OCI-LY7 (cell line): ENCODE measurements at regions of chr11 and their contacts with region 1.

Region 1: GRCh38 chr11:121292495-121293287 is at the start of gene SC5D:
- DNase-seq: peak; percentile 97
- H3K4me3 ChIP-seq: peak within 1 kb of the TSS; percentile 82
- H3K27ac ChIP-seq: peak within 1 kb of the TSS; percentile 76
- H3K4me1 ChIP-seq: peaks cover 26% of the 10 kb centered on the region
- CTCF ChIP-seq: no peak; the same call in 1 of the 2 replicates
- total RNA-seq, gene SC5D: 16.4 and 27.9 TPM in 2 replicates

Region 2: GRCh38 chr11:121236115-121237001 is 56.3 kb before region 1 on chr11:
- CTCF ChIA-PET with region 1: no interaction called
- POLR2A ChIA-PET with region 1: interaction called, 3 read pairs
- intact Hi-C with region 1: loop called (anchors 5 kb)
- DNase-seq: no peak
- H3K4me3 ChIP-seq: peak overlapping the region; percentile 49
- H3K27ac ChIP-seq: peak overlapping the region; percentile 55
- H3K4me1 ChIP-seq: peaks cover 29% of the 10 kb centered on the region
- CTCF ChIP-seq: no peak

Region 3: DNA sequence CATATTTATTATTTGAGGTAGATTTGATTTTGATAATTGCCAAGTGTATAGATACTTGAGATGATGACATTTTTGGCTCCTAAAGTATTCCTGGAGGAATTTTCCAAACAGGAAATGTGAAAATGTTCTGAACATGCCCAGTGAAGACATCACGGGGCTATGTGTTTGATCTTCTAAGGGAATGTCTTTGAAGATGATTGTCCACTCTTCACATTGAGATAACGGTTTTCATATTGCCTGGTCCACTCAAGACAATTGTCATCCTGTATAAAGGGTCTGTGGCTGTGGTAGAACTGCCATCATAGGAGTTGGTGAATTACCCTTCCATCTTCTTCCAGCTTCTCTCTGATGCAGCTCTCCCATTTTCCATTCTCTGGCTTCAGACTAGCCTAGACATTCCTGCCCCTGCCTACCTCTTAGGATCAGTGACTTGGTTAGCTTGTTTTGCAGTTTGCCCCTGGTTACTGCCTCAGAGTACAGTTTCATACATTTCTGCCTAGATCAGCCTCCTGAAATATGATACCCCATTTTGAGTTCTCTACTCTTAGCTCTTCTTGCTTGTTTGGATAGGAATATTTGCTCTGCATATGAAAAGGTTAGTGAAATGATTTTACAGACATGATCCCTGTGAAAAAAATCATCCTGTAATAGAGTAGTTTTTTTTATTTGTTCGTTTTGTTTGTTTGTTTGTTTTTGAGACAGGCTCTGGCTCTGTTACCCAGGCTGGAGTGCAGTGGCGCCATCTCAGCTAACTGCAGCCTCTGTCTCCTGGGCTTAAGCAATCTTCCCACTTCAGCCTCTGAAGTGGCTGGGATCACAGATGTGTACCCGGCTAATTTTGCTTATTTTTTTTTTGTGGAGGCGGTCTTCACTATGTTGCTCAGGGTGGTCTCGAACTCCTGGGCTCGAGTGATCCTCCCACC is 271.5 kb after region 1 on chr11:
- CTCF ChIA-PET with region 1: no interaction called
- POLR2A ChIA-PET with region 1: no interaction called
- intact Hi-C with region 1: no loop called
- DNase-seq: no peak
- H3K4me3 ChIP-seq: no peak overlapping the region
- H3K27ac ChIP-seq: peak overlapping the region; percentile 6
- H3K4me1 ChIP-seq: peaks cover 62% of the 10 kb centered on the region
- CTCF ChIP-seq: no peak